ENCODE measurements at regions of chr6 and their contacts with region 1.

Region 1: DNA sequence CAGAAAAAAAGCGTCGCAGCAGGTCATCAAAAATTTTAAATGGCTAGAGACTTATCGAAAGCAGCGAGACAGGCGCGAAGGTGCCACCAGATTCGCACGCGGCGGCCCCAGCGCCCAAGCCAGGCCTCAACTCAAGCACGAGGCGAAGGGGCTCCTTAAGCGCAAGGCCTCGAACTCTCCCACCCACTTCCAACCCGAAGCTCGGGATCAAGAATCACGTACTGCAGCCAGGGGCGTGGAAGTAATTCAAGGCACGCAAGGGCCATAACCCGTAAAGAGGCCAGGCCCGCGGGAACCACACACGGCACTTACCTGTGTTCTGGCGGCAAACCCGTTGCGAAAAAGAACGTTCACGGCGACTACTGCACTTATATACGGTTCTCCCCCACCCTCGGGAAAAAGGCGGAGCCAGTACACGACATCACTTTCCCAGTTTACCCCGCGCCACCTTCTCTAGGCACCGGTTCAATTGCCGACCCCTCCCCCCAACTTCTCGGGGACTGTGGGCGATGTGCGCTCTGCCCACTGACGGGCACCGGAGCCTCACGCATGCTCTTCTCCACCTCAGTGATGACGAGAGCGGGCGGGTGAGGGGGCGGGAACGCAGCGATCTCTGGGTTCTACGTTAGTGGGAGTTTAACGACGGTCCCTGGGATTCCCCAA is at the start of gene EEF1A1:
- DNase-seq: peak; percentile 99 to 100 (median 100)
- ATAC-seq: peak; percentile 94 to 97
- H3K4me3 ChIP-seq: peak within 1 kb of the TSS; percentile 73
- H3K27ac ChIP-seq: peak within 1 kb of the TSS; percentile 99
- H3K4me1 ChIP-seq: no peaks in the 10 kb centered on the region
- H3K27me3 ChIP-seq: no peaks in the 10 kb centered on the region
- total RNA-seq, gene EEF1A1: 4,421 to 6,620 (median 4,841) TPM

Region 2: DNA sequence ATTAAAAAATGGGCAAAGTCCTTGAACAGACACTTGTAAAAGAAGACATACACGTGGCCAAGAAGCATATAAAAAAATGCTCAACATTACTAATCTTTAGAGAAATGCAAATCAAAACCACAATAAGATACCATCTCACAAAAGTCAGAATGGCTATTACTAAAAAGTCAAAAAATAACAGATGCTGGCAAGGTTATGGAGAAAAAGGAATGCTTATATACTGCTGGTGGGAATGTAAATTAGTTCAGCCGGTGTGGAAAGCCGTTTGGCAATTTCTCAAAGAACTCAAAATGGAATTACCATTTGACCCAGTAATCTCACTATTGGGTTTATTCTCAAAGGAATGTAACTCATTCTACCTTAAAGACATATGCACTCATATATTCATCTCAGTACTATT is 462.1 kb before region 1 on chr6:
- intact Hi-C with region 1: no loop called
- DNase-seq: no peak
- ATAC-seq: no peak
- H3K4me3 ChIP-seq: no peak overlapping the region
- H3K27ac ChIP-seq: no peak overlapping the region
- H3K4me1 ChIP-seq: no peaks in the 10 kb centered on the region
- H3K27me3 ChIP-seq: no peaks in the 10 kb centered on the region

Region 3: GRCh38 chr6:73580247-73581149 is 59.7 kb after region 1 on chr6:
- intact Hi-C with region 1: loop called in 3 of 4 experiments (anchors 10 kb)
- DNase-seq: peak; percentile 89 to 92 (median 91)
- ATAC-seq: peak; percentile 96 to 99
- H3K4me3 ChIP-seq: peak overlapping the region; percentile 7
- H3K27ac ChIP-seq: peak overlapping the region; percentile 96
- H3K4me1 ChIP-seq: peaks cover 8% of the 10 kb centered on the region
- H3K27me3 ChIP-seq: no peaks in the 10 kb centered on the region

Region 4: GRCh38 chr6:73604020-73604419 is 83.2 kb after region 1 on chr6:
- intact Hi-C with region 1: loop called in 2 of 4 experiments (anchors 5 to 10 kb)
- DNase-seq: no peak
- ATAC-seq: peak; percentile 55 to 86
- H3K4me3 ChIP-seq: no peak overlapping the region
- H3K27ac ChIP-seq: no peak overlapping the region
- H3K4me1 ChIP-seq: no peaks in the 10 kb centered on the region
- H3K27me3 ChIP-seq: no peaks in the 10 kb centered on the region

Region 5: GRCh38 chr6:73610444-73611275 is 89.8 kb after region 1 on chr6:
- intact Hi-C with region 1: loop called in 3 of 4 experiments (anchors 5 to 10 kb)
- DNase-seq: no peak
- ATAC-seq: peak; percentile 52 to 63
- H3K4me3 ChIP-seq: no peak overlapping the region
- H3K27ac ChIP-seq: no peak overlapping the region
- H3K4me1 ChIP-seq: no peaks in the 10 kb centered on the region
- H3K27me3 ChIP-seq: no peaks in the 10 kb centered on the region

Region 6: DNA sequence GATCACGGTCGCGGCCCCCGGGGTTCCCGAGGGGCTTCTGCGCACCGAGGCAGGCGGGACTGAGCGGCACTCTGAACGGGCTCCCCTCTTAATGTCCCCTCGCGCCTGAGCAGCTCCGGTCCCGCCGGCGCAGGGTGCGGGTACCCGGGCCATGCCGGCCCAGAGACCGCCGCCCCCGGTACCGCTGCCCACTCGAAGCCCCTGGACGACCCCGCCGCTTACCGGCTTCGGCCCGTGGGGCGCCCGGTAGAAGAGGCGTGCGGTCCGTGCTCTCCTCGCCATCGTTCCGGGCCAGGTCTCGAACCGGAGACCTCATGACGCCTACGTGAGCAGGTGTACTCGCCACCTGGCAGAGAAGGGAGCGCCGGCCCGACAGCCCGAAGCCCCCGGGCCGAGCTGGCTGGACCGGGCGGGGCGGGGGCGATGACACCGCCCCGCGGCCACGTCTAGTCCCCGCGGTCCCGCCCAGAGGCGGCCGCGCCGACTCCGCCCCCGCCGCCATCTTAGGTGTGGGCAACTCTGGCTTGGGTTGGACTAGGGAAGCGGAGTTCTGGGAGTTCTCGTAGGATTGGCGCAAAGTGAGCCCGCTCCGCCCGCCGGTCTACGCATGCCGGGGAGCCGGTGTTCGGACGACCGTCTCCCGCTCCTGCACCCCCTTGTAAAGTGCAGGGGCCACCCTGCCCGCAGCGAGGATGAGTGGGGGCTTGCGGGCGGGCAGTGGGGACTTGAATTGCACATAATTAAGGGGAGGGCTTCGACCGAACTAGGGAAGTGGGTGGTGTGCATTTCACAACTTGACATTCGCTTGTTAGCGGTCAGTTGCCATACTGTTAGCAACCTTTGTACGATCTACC is 133.0 kb after region 1 on chr6 and contains the start of gene SLC17A5:
- intact Hi-C with region 1: loop called in 1 of 4 experiments (anchors 5 kb)
- DNase-seq: peak; percentile 93 to 98 (median 98)
- ATAC-seq: peak; percentile 99
- H3K4me3 ChIP-seq: peak within 1 kb of the TSS; percentile 91
- H3K27ac ChIP-seq: peak within 1 kb of the TSS; percentile 97
- H3K4me1 ChIP-seq: no peaks in the 10 kb centered on the region
- H3K27me3 ChIP-seq: no peaks in the 10 kb centered on the region
- total RNA-seq, gene SLC17A5: 6.1 to 13.1 (median 8.0) TPM